ENCODE measurements at regions of chr1 and their contacts with region 1.

Region 1: GRCh38 chr1:227333423-227333822 is 15.1 kb upstream of the CDC42BPA start:
- DNase-seq: peak; percentile 89
- H3K4me3 Mint-ChIP-seq: no peak overlapping the region
- H3K27ac Mint-ChIP-seq: peak overlapping the region; percentile 77
- H3K4me1 Mint-ChIP-seq: no peaks in the 10 kb centered on the region
- H3K27me3 Mint-ChIP-seq: no peaks in the 10 kb centered on the region
- CTCF ChIP-seq: no peak

Region 2: DNA sequence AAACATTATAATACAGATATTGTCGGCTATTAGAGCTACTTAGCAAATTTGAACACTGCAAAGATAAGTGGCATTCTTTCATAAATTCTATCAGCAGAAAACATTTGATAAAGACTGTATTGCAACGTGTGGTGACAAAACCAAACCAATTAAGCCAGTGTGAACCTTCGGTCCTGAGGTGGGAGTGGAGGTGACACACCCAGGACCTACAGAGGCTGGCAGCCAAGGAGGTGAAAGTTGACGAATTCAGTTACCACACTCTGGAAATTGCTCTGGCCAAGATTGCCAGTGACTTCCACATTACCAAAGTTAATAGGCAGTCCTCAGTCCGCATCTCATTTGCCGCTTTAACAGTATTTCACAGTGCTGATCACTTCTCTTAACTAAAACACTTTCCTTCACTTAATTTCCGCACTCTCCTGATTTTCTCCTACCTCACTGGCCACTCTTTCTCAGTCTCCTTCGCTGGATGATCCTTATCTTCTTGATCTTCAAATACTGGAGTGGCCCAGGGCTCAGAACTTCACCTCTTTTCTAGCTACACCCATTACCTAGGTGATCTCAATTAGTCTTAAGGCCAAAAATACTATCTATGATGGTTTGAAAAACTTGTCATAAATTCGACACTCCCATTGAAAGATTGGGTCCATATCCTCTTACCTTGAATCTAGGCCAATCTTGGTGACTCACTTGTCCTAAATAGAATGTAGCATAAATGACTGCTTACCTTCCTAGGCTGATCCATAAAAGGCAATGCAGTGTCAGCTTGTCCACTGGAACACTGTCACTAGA is 10.1 kb before region 1 on chr1:
- CTCF ChIA-PET with region 1: interaction called, 10 read pairs
- POLR2A ChIA-PET with region 1: interaction called, 16 read pairs
- intact Hi-C with region 1: no loop called
- DNase-seq: peak; percentile 69
- H3K4me3 Mint-ChIP-seq: no peak overlapping the region
- H3K27ac Mint-ChIP-seq: no peak overlapping the region
- H3K4me1 Mint-ChIP-seq: peaks cover 20% of the 10 kb centered on the region
- H3K27me3 Mint-ChIP-seq: no peaks in the 10 kb centered on the region
- CTCF ChIP-seq: no peak

Region 3: DNA sequence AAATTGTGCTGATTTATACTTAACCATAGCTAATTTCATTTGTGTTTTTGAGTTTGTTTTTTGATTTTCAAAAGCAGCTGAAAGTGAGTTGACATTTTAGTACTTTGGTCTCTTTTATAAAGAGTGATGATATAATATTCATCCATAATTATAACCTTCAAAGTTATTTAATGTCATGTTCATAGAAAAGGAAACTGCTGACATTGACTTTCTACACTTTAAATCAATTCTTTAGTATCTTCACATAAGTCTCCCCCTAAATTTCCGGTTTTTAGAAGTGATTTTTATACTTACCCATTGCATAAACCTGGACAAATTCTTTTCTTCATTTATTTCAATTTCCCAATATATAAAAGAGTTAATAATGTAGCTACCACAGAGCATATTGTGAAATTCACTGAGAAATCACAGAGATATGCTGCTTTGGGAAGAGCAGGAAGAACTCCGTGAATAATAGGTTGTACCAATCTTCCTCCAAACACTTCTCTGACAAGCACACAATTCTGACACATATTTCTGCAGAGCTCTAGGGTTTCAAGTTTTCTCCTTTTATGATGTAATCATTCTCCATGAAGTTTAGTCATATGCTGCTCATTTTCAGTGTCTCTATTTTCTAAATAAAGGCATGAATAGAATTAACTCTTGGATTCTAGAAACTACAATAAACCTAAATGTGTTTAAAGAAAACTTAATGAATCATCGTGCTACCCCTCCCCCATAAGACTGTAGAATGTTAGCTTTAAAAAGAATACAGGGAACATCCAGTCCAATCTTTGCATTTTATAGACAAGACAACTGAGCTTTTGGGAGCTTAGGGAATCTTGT is 10.5 kb after region 1 on chr1:
- CTCF ChIA-PET with region 1: interaction called, 10 read pairs
- POLR2A ChIA-PET with region 1: interaction called, 11 read pairs
- intact Hi-C with region 1: no loop called
- DNase-seq: peak; percentile 96
- H3K4me3 Mint-ChIP-seq: peak overlapping the region; percentile 4
- H3K27ac Mint-ChIP-seq: peak overlapping the region; percentile 75
- H3K4me1 Mint-ChIP-seq: peaks cover 19% of the 10 kb centered on the region
- H3K27me3 Mint-ChIP-seq: no peaks in the 10 kb centered on the region
- CTCF ChIP-seq: no peak

Region 4: DNA sequence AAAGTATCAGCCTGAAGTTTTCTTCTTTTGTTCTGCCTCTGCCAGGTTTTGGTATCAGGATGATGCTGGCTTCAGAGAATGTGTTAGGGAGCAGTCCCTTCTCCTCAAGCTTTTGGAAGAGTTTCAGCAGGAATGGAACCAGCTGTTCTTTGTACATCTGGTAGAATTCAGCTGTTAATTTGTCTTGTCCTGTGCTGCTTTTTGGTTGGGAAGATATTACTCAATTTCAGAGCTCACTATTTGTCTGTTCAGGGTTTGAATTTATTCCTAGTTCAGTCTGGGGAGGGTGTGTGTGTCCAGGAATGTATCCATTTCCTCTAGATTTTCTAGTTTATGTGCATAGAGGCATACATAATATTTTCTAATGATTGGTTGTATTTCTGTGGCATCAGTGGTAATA is 242.8 kb after region 1 on chr1:
- CTCF ChIA-PET with region 1: no interaction called
- POLR2A ChIA-PET with region 1: no interaction called
- intact Hi-C with region 1: no loop called
- DNase-seq: no peak
- H3K4me3 Mint-ChIP-seq: no peak overlapping the region
- H3K27ac Mint-ChIP-seq: no peak overlapping the region
- H3K4me1 Mint-ChIP-seq: no peaks in the 10 kb centered on the region
- H3K27me3 Mint-ChIP-seq: no peaks in the 10 kb centered on the region
- CTCF ChIP-seq: no peak